ENCODE measurements at regions of chr4 and their contacts with region 1.

Region 1: GRCh38 chr4:16196478-16197393 is 29.5 kb downstream of the TAPT1 start:
- DNase-seq: no peak
- H3K4me3 ChIP-seq: peak overlapping the region in 1 of 8 donors; percentile 37
- H3K27ac ChIP-seq: peak overlapping the region in 6 of 8 donors; percentile 18 to 64 (median 54)
- H3K4me1 ChIP-seq: peaks cover 3 to 80% (median 37%) of the 10 kb centered on the region in 6 donors
- H3K27me3 ChIP-seq: no peaks in the 10 kb centered on the region
- CTCF ChIP-seq: peak in 7 of 11 experiments; percentile 31 to 54 (median 43)
- POLR2A ChIP-seq: no peak

Region 2: DNA sequence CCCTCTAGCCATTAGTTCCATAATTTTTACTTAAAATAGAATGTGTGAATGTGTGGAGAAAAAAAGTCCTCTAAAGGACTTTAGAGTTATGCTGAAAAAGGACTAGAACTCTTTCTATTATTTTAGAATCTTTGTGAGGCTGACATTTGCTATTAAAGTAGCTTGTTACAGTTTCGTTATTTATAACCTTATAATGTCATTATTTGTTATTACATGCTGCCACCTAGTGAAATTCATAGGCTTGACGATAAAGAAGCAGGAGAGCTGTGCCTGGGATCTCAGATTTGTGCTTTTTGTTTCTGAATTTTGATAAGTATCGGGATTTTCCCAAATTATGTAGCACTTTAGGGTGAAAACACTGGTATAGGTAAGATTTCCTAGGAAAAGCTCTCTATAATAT is 68.1 kb after region 1 on chr4:
- intact Hi-C with region 1: loop called (anchors 10 kb)
- DNase-seq: no peak
- H3K4me3 ChIP-seq: no peak overlapping the region
- H3K27ac ChIP-seq: no peak overlapping the region
- H3K4me1 ChIP-seq: peaks cover 0 to 47% (median 6%) of the 10 kb centered on the region in 6 donors
- H3K27me3 ChIP-seq: no peaks in the 10 kb centered on the region
- CTCF ChIP-seq: peak; percentile 27 to 79 (median 64)
- POLR2A ChIP-seq: no peak